Mammary epithelial cell (primary cell): ENCODE measurements at regions of chr2 and their contacts with region 1.

Region 1: GRCh38 chr2:175880-176800 is 87.7 kb downstream of the SH3YL1 start:
- DNase-seq: peak; percentile 44
- H3K4me3 ChIP-seq: no peak overlapping the region
- H3K27ac ChIP-seq: no peak overlapping the region
- H3K4me1 ChIP-seq: peaks cover 27% of the 10 kb centered on the region
- H3K27me3 ChIP-seq: no peaks in the 10 kb centered on the region
- CTCF ChIP-seq: no peak

Region 2: DNA sequence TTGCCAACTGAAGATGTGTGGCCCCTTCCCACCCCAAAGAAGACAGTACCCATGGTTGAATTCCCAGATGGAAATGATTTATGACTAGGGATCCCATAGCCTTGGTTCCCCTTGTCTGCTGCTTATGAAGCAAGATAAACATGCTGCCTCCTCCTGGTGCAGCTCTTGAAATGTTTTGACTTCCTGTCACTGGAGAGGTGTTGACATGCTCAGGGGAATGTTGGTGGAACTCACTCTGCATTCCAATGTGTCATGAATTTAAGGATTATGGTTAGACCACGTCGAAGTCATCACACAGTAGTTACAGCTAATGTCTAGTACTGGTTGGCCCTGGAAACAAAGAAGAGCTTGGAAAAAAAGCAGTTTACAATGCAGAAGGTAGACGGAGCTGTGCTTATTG is 60.8 kb before region 1 on chr2:
- CTCF ChIA-PET with region 1: no interaction called
- dilution Hi-C with region 1: no loop called
- in situ Hi-C with region 1: no loop called
- intact Hi-C with region 1: no loop called
- DNase-seq: peak; percentile 72
- H3K4me3 ChIP-seq: no peak overlapping the region
- H3K27ac ChIP-seq: no peak overlapping the region
- H3K4me1 ChIP-seq: peaks cover 10% of the 10 kb centered on the region
- H3K27me3 ChIP-seq: no peaks in the 10 kb centered on the region
- CTCF ChIP-seq: peak; percentile 13 to 49

Region 3: GRCh38 chr2:191311-192190 is 15.4 kb after region 1 on chr2:
- CTCF ChIA-PET with region 1: no interaction called
- dilution Hi-C with region 1: no loop called
- in situ Hi-C with region 1: no loop called
- intact Hi-C with region 1: no loop called
- DNase-seq: no peak
- H3K4me3 ChIP-seq: no peak overlapping the region
- H3K27ac ChIP-seq: no peak overlapping the region
- H3K4me1 ChIP-seq: peaks cover 4% of the 10 kb centered on the region
- H3K27me3 ChIP-seq: no peaks in the 10 kb centered on the region
- CTCF ChIP-seq: no peak

Region 4: GRCh38 chr2:341017-341542 is 164.9 kb after region 1 on chr2:
- CTCF ChIA-PET with region 1: interaction called, 10 read pairs
- dilution Hi-C with region 1: no loop called
- in situ Hi-C with region 1: no loop called
- intact Hi-C with region 1: no loop called
- DNase-seq: no peak
- H3K4me3 ChIP-seq: no peak overlapping the region
- H3K27ac ChIP-seq: no peak overlapping the region
- H3K4me1 ChIP-seq: no peaks in the 10 kb centered on the region
- H3K27me3 ChIP-seq: no peaks in the 10 kb centered on the region
- CTCF ChIP-seq: no peak

Region 5: DNA sequence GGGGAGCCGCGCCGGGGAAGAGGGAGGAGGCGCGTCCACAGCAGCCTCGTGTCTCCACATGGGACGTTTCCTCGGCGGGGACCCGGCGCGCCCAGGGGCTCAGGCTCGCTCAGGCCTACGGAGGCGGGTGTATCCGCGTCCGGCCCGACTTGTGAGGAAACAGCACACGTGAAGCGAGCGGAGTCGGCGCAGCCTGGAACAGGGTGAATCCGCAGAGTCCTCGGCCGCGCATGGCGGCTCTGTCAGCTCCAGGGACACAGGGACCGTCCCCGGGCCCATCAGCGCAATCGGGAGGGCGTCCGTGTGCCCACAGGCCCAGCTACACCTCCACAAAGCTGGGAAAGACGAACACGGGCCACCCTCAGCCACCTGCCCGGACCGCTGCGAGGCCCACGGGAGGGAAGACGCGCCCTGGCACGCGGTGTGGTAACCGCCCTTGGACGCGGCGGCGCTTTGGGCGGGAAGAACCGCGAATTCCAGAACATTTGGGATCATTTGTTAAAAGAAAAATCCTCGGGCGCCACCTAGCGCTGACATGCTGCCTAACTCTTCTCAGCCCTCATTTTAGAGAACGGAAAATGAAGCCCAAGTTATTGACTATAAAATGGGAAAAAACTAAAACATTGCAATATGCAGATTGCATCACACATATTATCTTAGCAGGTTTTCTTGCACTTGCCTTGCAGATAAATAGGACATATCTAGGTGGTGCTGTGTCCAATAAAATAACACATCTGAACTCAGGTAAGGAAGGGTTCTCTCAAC is 460.7 kb after region 1 on chr2:
- CTCF ChIA-PET with region 1: no interaction called
- dilution Hi-C with region 1: no loop called
- in situ Hi-C with region 1: no loop called
- intact Hi-C with region 1: loop called (anchors 1 kb)
- DNase-seq: peak; percentile 44
- H3K4me3 ChIP-seq: no peak overlapping the region
- H3K27ac ChIP-seq: no peak overlapping the region
- H3K4me1 ChIP-seq: no peaks in the 10 kb centered on the region
- H3K27me3 ChIP-seq: no peaks in the 10 kb centered on the region
- CTCF ChIP-seq: peak; percentile 67 to 68